Activated B cell treated with CpG ODN at 0.5 μM for 24 hours (primary cell): ENCODE measurements at regions of chr6 and their contacts with region 1.

Region 1: DNA sequence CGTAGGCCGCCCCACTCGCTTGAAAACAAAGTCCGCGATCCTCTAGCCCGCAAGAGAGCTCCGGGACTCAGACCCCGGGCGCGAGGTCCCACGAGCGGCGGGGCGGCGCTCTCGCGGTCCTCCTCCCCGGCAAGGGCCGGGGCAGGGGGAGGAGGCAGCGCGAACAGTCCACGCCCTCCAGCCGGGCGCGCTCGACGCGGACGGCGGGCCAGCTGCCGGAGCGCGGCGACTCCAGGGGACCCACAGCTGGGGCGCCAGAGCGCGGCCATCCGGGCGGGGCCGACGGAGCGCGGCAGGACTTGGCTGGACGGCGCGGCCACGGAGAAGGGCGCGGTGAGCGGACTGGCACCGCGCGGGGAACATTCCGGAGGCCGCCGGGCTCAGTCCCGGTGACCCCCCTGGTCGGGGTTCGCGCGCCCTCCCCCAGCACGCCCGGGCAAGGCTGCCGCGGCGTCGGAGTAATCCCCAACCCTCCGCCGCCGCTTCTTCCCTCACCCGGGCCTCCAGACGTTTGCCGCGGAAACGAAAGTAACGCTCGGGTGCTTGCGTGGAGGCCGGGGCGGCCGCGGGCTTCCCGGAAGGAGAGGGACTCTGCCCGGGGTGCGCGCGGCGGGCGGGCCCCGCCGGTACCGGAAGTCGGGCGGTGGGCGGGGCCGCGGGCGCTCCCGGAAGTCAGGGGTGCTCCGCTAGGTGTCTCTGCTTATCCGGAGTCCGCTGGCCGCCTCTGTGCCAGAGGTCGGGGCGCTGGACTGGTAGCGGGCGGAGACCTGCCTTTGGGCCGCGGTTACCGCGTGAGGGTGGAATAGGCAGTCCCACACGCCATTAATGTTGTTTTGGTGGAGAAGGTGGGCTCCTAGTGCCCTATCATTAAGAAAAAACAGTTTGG is at the start of gene RIPK1:
- DNase-seq: peak; percentile 98
- ATAC-seq: peak; percentile 74
- H3K4me3 Mint-ChIP-seq: peak within 1 kb of the TSS; percentile 93
- H3K27ac Mint-ChIP-seq: peak within 1 kb of the TSS; percentile 94
- H3K4me1 Mint-ChIP-seq: peaks cover 38% of the 10 kb centered on the region
- H3K27me3 Mint-ChIP-seq: no peaks in the 10 kb centered on the region
- CTCF ChIP-seq: no peak
- total RNA-seq, gene RIPK1: 20.5 and 21.8 TPM in 2 replicates

Region 2: DNA sequence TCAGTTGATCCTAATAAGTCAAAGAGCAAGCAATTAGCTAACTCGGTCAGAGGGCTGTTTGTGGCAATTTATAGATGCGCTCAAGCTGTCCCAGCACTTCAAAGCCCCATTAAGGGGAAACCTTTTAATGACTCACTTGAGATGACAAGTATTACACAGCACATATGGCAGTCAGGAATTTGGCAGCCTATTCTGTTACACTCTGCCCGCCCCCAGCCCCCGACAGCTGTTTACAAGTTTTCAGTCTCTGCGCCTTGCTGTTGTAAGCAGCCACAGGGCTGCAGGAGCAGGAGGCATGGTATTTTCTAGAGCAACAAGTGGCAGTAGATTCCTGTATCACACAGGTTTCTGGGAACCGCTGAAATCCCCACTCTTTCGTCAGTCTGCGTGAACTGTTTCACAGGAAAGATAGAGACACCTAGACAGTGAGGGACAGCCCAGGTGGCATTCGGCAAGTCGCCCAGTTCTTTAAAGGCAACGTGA is 1195.9 kb before region 1 on chr6:
- CTCF ChIA-PET with region 1: no interaction called
- POLR2A ChIA-PET with region 1: no interaction called
- intact Hi-C with region 1: no loop called
- DNase-seq: no peak
- ATAC-seq: no peak
- H3K4me3 Mint-ChIP-seq: no peak overlapping the region
- H3K27ac Mint-ChIP-seq: no peak overlapping the region
- H3K4me1 Mint-ChIP-seq: peaks cover 30% of the 10 kb centered on the region
- H3K27me3 Mint-ChIP-seq: no peaks in the 10 kb centered on the region
- CTCF ChIP-seq: no peak

Region 3: DNA sequence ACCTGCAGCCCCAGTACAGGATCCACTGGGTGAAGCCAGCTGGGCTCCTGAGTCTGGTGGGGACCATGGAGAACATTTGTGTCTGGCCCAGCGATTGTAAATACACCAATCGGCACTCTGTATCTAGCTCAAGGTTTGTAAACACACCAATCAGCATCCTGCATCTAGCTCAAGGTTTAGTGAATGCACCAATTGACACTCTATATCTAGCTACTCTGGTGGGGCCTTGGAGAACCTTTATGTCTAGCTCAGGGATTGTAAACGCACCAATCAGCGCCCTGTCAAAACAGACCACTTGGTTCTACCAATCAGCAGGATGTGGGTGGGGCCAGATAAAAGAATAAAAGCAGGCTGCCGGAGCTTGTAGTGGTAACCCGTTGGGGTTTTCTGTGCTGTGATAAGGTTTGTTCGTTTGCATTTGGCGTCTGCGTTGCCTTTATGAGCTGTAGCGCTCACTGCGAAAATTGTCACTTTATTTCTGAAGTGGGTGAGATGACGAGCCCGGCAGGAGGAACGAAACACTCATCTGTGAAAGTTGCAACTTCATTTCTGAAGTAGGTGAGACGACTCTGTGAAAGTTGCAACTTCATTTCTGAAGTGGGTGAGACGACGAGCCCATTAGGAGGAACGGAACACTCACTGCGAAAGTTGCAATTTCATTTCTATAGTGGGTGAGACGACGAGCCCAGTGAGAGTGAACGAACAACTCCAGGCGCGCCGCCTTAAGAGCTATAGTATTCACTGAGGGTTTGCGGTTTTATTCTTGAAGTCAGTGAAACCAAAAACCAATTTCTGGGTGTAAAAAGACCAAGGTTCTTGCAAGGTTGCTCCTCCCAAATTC is 128.3 kb before region 1 on chr6:
- CTCF ChIA-PET with region 1: no interaction called
- POLR2A ChIA-PET with region 1: interaction called, 10 read pairs
- intact Hi-C with region 1: loop called (anchors 5 kb)
- DNase-seq: peak; percentile 39
- ATAC-seq: peak; percentile 81
- H3K4me3 Mint-ChIP-seq: peak overlapping the region; percentile 82
- H3K27ac Mint-ChIP-seq: peak overlapping the region; percentile 94
- H3K4me1 Mint-ChIP-seq: peaks cover 69% of the 10 kb centered on the region
- H3K27me3 Mint-ChIP-seq: no peaks in the 10 kb centered on the region
- CTCF ChIP-seq: no peak

Region 4: GRCh38 chr6:3023663-3024483 is 44.7 kb before region 1 on chr6:
- CTCF ChIA-PET with region 1: interaction called, 3 read pairs
- POLR2A ChIA-PET with region 1: interaction called, 15 read pairs
- intact Hi-C with region 1: loop called (anchors 1 kb)
- DNase-seq: peak; percentile 76
- ATAC-seq: peak; percentile 82
- H3K4me3 Mint-ChIP-seq: peak overlapping the region; percentile 90
- H3K27ac Mint-ChIP-seq: peak overlapping the region; percentile 88
- H3K4me1 Mint-ChIP-seq: peaks cover 54% of the 10 kb centered on the region
- H3K27me3 Mint-ChIP-seq: no peaks in the 10 kb centered on the region
- CTCF ChIP-seq: no peak

Region 5: DNA sequence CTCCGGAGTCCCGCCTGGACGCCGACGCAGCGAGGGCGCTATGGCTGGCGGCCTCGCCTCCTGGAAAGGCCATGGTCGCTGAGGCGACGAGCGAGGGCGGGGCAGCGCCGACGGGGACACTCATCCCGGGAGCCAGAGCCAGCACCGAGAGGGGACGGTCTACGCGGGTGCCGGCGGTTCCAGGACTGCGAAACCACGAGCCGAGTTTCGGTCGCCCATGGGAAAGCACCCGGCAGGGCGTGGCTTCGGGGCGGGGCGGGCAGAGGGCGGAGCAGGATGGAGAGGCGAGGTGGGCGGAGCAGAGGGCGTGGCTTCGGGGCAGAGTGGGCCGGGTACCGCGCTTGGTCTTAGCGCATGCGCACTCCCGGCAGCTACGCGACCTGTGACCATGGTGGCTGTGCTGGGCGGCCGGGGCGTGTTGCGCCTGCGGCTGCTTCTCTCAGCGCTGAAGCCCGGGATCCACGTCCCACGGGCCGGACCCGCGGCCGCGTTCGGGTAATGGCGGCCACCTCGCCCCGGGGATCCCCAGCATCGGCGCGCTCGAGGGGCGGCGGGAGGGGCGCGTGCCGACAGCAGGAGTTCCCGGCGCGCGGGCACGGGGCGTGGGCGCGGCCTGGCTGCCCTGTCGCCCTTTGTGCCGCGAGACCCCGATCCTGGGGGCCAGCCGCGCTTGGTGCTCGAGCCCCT is 49.9 kb after region 1 on chr6 and contains the start of gene BPHL:
- CTCF ChIA-PET with region 1: no interaction called
- POLR2A ChIA-PET with region 1: interaction called, 9 read pairs
- intact Hi-C with region 1: loop called (anchors 1 kb)
- DNase-seq: peak; percentile 100
- ATAC-seq: peak; percentile 92
- H3K4me3 Mint-ChIP-seq: peak within 1 kb of the TSS; percentile 89
- H3K27ac Mint-ChIP-seq: peak within 1 kb of the TSS; percentile 93
- H3K4me1 Mint-ChIP-seq: peaks cover 16% of the 10 kb centered on the region
- H3K27me3 Mint-ChIP-seq: no peaks in the 10 kb centered on the region
- CTCF ChIP-seq: no peak
- total RNA-seq, gene BPHL: 10.5 and 11.0 TPM in 2 replicates

Region 6: GRCh38 chr6:3251462-3252314 is 183.1 kb after region 1 on chr6:
- CTCF ChIA-PET with region 1: interaction called, 4 read pairs
- POLR2A ChIA-PET with region 1: interaction called, 6 read pairs
- intact Hi-C with region 1: loop called (anchors 1 kb)
- DNase-seq: peak; percentile 68
- ATAC-seq: peak; percentile 100
- H3K4me3 Mint-ChIP-seq: peak overlapping the region; percentile 64
- H3K27ac Mint-ChIP-seq: peak overlapping the region; percentile 21
- H3K4me1 Mint-ChIP-seq: peaks cover 6% of the 10 kb centered on the region
- H3K27me3 Mint-ChIP-seq: peaks cover 30% of the 10 kb centered on the region
- CTCF ChIP-seq: peak; percentile 91

Region 7: DNA sequence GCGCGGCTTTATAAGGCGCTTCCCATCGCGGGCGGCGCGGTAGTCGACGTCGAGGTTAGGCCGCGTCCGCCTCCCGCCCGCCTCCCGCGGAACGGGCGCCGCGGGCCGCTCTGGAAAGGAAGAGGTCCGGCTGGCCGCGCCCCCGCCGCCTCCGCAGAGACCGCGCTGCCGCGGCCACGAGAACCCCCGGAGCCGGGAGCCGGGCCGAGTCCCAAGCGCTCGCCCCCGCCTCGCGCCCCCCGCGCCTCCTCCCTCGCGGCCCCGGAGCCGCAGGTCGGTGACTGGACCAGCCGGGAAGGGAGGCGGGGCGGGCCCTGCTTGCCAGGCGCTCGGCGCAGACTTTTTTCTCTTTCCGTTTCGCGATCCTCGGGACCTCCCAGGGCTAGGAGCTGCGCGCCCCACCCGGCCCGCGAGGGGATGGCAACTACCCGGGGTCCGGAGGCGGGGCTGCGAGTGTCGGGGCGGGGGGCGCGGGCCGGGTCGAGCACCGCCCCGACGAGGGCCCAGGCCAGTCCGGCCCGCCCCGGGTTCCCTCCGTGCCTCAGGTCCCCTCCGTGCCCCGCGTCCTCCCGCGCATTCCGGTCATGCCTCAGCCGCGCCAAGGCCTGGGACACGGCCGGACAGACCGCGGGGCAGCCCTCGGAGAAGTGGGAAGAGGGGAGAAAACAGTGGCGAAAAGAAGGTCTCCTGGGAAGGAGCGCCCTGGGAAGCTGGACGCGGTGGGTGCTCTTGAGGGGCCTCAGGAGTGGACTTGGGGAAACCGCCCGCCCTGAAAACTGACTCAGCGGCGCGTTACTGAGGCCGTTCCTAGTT is 683.4 kb after region 1 on chr6:
- CTCF ChIA-PET with region 1: no interaction called
- POLR2A ChIA-PET with region 1: no interaction called
- intact Hi-C with region 1: loop called (anchors 5 kb)
- DNase-seq: peak; percentile 72
- ATAC-seq: peak; percentile 73
- H3K4me3 Mint-ChIP-seq: peak overlapping the region; percentile 72
- H3K27ac Mint-ChIP-seq: no peak overlapping the region
- H3K4me1 Mint-ChIP-seq: peaks cover 52% of the 10 kb centered on the region
- H3K27me3 Mint-ChIP-seq: no peaks in the 10 kb centered on the region
- CTCF ChIP-seq: no peak